Psoas muscle (tissue), 8 donors: ENCODE measurements at regions of chr5 and their contacts with region 1.

Region 1: DNA sequence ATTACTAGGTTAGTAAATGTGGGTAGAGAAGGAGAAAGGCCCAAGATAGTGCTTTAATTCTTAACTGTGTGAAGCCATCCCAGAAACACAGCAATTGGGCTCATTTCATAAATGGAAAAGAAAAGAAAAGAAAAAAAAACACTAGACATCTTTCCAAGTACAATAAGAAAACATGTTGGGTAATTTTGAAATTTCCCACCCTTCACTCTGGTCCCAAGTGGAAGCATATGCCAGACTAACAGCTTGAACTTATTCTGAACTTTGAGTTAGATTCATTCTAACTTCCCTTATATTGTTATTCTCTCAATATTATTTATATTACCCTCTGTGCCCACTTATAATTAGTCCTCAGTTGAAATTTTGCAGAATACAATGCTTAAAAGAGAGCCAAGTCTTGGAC is 113.4 kb upstream of the GHR start:
- DNase-seq: no peak
- ATAC-seq: no peak
- H3K4me3 ChIP-seq: no peak overlapping the region
- H3K27ac ChIP-seq: no peak overlapping the region
- H3K4me1 ChIP-seq: no peaks in the 10 kb centered on the region
- H3K27me3 ChIP-seq: no peaks in the 10 kb centered on the region
- CTCF ChIP-seq: no peak

Region 2: DNA sequence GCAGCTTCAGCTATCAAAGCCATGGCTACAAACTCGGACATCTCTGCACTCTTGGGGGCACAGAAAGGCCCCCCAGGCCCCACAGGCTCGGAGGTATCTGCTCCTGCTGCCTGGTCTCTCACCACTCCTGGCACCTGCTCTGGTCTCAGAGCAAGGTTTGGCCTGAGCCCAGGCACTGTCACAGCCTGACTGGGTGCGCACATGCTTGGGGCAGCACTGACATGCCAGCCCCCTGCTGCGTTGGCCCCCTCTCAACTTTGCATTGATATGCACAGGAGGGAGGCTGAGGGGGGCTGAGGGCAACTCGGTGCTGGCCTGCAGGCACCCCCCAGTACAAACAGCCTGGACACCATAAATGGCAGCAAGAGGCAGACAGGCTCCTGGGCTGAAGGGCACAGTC is 86.2 kb after region 1 on chr5:
- intact Hi-C with region 1: loop called in 1 of 2 experiments (anchors 10 kb)
- DNase-seq: no peak
- ATAC-seq: no peak
- H3K4me3 ChIP-seq: no peak overlapping the region
- H3K27ac ChIP-seq: no peak overlapping the region
- H3K4me1 ChIP-seq: no peaks in the 10 kb centered on the region
- H3K27me3 ChIP-seq: no peaks in the 10 kb centered on the region
- CTCF ChIP-seq: no peak